Thyroid gland (tissue), 4 donors: ENCODE measurements at regions of chr15 and their contacts with region 1.

Region 1: DNA sequence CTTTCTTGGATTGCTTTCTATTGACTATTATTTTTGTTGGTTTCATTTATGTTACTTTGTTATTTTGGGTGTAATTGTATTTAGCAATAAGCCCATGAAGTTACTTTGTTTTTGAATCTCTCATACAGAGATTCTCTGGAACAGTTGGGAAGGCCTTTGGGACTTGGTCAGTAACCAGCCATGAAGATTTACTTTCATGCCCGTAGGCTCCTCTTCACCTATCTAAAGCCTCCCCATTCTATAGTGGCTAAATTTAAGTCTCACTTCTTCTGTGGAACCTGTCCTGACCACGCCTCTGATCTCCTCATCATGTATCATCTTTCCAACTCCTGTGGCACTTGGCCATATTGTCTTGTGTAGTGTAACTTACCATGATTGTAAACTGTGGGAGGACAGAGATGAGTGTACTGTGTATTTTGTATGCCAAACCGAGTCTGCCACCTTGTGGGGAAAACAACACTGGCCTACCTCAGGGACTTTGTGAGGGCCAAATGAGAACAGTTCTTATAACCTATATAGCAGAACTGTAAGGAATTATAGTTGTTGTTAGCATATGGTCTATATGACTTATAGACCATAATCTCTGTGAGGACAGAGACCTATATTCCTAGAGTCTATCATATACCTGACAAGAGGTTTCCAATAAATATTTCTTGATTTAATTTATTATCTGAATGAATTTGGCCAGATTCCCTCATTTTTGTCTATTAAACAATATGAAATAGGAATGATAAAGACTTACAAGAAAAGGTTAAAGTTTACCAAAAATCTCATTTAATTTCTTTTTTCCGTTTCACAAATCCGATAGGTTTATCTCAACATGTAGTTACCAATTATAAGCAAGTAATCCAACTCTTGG is 75.0 kb downstream of the STARD9 start:
- DNase-seq: peak; percentile 45 to 53
- H3K4me3 ChIP-seq: no peak overlapping the region
- H3K27ac ChIP-seq: no peak overlapping the region
- H3K4me1 ChIP-seq: no peaks in the 10 kb centered on the region
- H3K27me3 ChIP-seq: no peaks in the 10 kb centered on the region
- CTCF ChIP-seq: peak; percentile 29 to 64 (median 46)
- POLR2A ChIP-seq: no peak

Region 2: DNA sequence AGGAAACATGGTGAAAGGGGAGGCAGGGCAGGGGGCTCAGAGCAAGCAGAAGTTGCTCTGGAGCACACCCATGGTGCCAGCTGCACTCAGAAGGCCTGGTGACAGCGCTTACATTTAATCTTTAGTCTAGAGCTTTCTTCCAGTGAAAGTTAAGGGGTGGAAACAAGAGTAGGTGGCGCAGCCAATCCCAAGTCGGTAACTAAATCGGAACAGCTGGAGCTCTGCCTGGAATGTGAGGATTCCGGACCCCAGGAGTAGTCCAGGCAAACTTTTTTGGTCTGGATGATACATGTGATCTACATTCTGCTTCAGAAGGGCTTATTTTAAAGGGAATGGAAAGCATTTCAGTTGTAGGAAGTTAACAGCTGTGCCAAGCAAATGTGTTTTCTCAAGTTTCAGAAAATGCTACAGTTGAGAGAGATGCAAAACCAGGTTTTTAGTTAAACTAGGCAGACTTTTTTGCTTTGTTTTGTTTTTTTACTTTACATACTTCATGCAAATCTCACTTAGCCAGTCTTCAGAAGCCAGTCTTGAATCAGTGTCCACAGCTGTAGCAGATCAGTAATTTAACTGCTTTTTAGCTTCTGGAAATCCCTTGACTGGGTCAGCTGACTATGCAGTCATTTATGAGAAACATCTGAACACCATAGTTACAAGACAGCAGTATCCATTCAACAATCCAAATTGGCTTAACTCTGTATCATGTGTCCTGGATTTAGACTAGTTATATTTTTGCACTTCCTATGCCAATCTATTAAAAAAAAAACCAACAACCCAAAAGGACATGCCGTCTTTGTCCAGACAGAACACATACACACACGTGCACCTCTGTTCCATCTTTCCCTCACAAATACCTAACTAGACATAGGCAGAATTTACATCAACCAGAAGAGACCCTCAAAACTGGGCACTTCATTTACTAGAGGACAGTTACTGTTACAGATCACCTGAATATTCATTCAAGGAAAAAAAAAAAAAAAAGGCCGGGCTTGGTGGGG is 192.7 kb before region 1 on chr15:
- intact Hi-C with region 1: loop called (anchors 5 kb)
- DNase-seq: peak; percentile 74 to 76
- H3K4me3 ChIP-seq: no peak overlapping the region
- H3K27ac ChIP-seq: peak overlapping the region; percentile 66 to 83 (median 68)
- H3K4me1 ChIP-seq: peaks cover 8 to 18% of the 10 kb centered on the region in 2 donors
- H3K27me3 ChIP-seq: no peaks in the 10 kb centered on the region
- CTCF ChIP-seq: no peak
- POLR2A ChIP-seq: peak in 1 of 2 donors; percentile 60

Region 3: DNA sequence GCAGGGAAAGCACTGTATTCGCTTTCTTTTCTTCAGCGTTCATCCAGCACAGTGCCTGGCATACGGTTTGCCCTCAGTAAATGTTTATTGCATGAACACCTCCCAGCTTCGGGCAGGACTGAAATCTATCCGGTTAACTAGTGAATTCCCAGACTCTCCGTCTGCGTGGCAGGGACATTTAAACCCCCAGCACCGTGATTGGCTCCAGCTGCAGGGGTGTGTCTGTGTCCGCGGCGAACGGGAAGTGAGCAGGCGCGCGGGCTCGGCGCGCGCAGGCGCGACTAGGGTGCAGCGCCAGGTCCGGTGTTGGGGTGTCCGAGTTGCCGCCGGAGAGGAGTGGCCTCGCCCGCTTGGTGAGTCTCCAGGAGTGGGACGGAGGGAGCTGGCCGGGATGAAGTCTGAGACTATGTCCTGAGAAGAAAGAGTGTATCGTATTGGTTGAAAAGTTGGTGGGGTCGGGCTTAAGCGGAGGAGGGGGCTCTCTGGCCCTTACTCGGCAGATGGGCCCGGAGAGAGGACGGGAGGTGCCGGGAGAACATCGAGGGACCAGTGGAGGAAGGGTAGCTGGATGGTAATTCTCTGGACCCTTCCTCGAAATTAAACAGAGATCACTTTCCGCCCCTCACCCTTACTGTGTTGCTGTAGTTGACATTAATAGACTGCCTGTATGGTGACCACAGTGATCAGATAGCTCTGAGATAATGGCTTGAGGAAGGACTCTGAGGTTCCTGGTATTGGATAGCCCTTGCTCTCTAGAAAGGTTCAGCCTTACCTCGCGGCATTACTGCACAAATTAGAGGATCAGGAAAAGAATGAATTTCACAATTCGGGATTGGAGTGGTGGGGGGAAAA is 154.8 kb before region 1 on chr15 and contains the start of gene SNAP23:
- intact Hi-C with region 1: no loop called
- DNase-seq: peak; percentile 95
- H3K4me3 ChIP-seq: peak within 1 kb of the TSS; percentile 2 to 64 (median 50)
- H3K27ac ChIP-seq: peak within 1 kb of the TSS; percentile 77 to 92 (median 83)
- H3K4me1 ChIP-seq: peaks cover 39 to 46% of the 10 kb centered on the region in 2 donors
- H3K27me3 ChIP-seq: no peaks in the 10 kb centered on the region
- CTCF ChIP-seq: no peak
- POLR2A ChIP-seq: peak in 1 of 2 donors; percentile 94
- total RNA-seq, gene SNAP23: 55.7 to 76.9 (median 69.6) TPM

Region 4: GRCh38 chr15:42508263-42508690 is 142.2 kb before region 1 on chr15:
- intact Hi-C with region 1: loop called (anchors 5 kb)
- DNase-seq: no peak
- H3K4me3 ChIP-seq: no peak overlapping the region
- H3K27ac ChIP-seq: no peak overlapping the region
- H3K4me1 ChIP-seq: peaks cover 10 to 16% of the 10 kb centered on the region in 2 donors
- H3K27me3 ChIP-seq: no peaks in the 10 kb centered on the region
- CTCF ChIP-seq: no peak
- POLR2A ChIP-seq: no peak